ENCODE measurements at regions of chr11 and their contacts with region 1.

Region 1: DNA sequence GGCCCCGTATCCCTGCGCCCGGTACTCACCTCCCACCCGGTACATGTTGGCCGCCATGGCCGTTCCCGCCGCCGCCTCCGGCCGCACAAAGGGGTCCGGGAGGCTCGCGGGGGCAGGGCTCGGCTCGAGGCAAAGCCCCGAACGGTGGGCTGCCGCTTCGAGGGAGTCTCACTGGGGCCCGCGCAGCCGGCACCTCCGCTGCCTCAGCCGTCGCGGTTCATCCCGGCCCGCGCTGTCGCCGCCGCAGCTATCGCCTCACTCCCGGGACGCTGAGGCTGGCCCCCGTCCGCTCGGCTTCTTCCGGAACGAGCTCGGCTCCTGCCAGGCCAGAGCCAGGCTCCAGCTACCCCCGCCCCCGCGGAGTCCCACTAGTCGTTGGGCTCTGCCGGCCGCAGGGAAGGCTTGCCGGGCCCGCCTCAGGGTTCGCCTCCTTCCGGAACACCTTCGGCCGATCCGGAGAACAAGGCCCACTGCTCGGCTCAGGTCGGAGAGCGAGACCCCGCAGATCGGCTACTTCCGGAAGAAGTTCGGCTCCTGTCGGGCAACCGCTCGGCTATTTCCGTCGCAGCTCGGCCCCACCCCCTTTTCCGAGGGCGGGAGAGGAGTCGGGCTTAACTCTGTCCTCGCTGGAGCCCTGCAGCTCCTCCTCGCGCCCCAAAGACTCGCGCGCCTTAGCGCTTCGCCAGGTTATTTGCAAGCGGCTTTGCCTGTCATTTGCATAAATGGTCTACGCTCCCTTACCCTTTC is at the start of gene MTA2:
- DNase-seq: peak; percentile 99
- ATAC-seq: peak; percentile 86
- H3K4me3 ChIP-seq: peak within 1 kb of the TSS; percentile 93
- H3K27ac ChIP-seq: peak within 1 kb of the TSS; percentile 69
- H3K4me1 ChIP-seq: peaks cover 21% of the 10 kb centered on the region
- H3K27me3 ChIP-seq: no peaks in the 10 kb centered on the region
- CTCF ChIP-seq: no peak
- total RNA-seq, gene MTA2: 193 and 259 TPM in 2 replicates

Region 2: GRCh38 chr11:62665075-62665598 is 63.6 kb after region 1 on chr11 and contains the starts of genes C11orf98 and CSKMT:
- CTCF ChIA-PET with region 1: no interaction called
- POLR2A ChIA-PET with region 1: interaction called, 10 read pairs
- intact Hi-C with region 1: loop called (anchors 5 kb)
- DNase-seq: peak; percentile 98
- ATAC-seq: peak; percentile 87
- H3K4me3 ChIP-seq: peak within 1 kb of the TSS; percentile 98
- H3K27ac ChIP-seq: peak within 1 kb of the TSS; percentile 36
- H3K4me1 ChIP-seq: peaks cover 26% of the 10 kb centered on the region
- H3K27me3 ChIP-seq: no peaks in the 10 kb centered on the region
- CTCF ChIP-seq: no peak
- total RNA-seq, gene C11orf98: 236 and 302 TPM in 2 replicates
- total RNA-seq, gene CSKMT: 12.9 and 16.3 TPM in 2 replicates

Region 3: GRCh38 chr11:62671575-62672389 is 70.2 kb after region 1 on chr11 and contains the starts of genes LBHD1 and UQCC3:
- CTCF ChIA-PET with region 1: no interaction called
- POLR2A ChIA-PET with region 1: interaction called, 10 read pairs
- intact Hi-C with region 1: loop called (anchors 5 kb)
- DNase-seq: peak; percentile 90
- ATAC-seq: peak; percentile 72
- H3K4me3 ChIP-seq: peak within 1 kb of the TSS; percentile 92
- H3K27ac ChIP-seq: peak within 1 kb of the TSS; percentile 80
- H3K4me1 ChIP-seq: peaks cover 40% of the 10 kb centered on the region
- H3K27me3 ChIP-seq: no peaks in the 10 kb centered on the region
- CTCF ChIP-seq: no peak
- total RNA-seq, gene LBHD1: 4.7 and 9.7 TPM in 2 replicates
- total RNA-seq, gene UQCC3: 83.6 and 95.6 TPM in 2 replicates